Dorsolateral prefrontal cortex (tissue), 120 donors: ENCODE measurements at regions of chr6 and their contacts with region 1.

Region 1: DNA sequence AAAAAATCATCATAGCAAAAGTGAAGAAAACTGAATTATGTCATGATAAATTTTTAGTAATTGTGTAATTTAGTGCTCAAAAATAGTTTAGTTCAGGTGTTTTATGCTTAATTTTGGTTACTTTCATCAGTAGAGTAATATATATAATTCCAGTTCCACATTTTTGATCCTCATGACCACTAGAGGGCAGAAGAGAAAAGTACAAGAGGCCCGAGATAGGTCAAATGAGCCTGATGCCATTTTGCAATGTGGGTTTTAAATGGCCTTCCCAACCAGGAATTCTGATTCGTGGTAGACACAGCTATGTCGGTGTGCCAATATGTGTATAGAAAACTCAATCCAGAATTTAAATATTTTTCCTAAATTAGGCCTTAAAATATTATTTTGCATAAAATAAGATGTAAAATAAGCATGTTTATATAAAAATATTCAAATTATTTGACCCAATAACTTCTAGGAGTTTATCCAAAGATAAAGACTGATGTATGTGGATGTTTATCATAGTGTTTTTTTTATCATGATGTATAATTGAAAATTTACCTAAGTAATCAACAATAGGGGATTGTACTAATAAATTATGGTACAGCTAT is 159.7 kb upstream of the RPS6KA2 start:
- DNase-seq: no peak
- H3K4me3 ChIP-seq: no peak overlapping the region
- H3K27ac ChIP-seq: no peak overlapping the region
- H3K27me3 ChIP-seq: no peaks in the 10 kb centered on the region
- CTCF ChIP-seq: peak; percentile 62 to 93 (median 79)

Region 2: GRCh38 chr6:166950443-166950821 is 163.6 kb after region 1 on chr6:
- intact Hi-C with region 1: loop called in 1 of 2 experiments (anchors 5 kb)
- DNase-seq: no peak
- H3K4me3 ChIP-seq: peak overlapping the region in 10 of 59 donors; percentile 2 to 50 (median 34)
- H3K27ac ChIP-seq: peak overlapping the region in 36 of 59 donors; percentile 10 to 80 (median 52)
- H3K27me3 ChIP-seq: no peaks in the 10 kb centered on the region
- CTCF ChIP-seq: no peak

Region 3: DNA sequence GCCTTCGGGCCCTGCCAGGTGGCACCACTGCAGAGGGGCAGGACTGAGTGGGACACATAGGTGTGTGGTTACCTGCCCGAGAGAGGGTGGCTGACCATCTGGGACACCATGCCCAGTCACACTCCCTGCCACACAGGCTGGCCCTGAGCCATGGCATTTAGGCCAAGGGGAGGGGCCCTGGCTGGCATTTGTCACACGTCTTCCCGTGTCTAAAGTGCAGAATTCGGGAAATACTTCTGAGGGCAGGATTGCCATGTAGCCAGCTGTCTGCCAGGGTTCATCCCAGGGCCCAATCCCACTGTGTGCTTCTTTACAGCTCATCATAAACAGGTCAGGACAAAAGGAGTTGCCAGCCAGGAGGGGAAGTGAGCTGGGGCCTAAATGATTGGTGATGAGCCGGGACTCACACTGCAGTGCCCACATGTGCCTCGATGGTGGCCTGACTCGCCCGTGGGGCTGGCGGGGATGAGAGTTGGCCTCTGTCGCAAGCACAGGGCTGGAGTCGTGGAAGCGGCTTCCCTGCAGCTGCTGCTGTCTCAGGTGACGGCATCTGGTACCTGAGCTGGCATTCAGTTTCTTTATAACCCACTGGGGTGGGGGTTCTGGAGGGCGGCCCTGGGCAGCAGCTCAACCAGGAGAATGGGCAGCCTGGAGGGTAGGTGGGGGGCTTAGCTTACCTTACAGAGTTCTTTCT is 498.4 kb after region 1 on chr6:
- intact Hi-C with region 1: loop called in 1 of 2 experiments (anchors 5 kb)
- DNase-seq: peak in 2 of 10 donors; percentile 11 to 66
- H3K4me3 ChIP-seq: no peak overlapping the region
- H3K27ac ChIP-seq: no peak overlapping the region
- H3K27me3 ChIP-seq: no peaks in the 10 kb centered on the region
- CTCF ChIP-seq: no peak